ENCODE measurements at regions of chr9 and their contacts with region 1.

Region 1: GRCh38 chr9:125241000-125241862 is at the start of gene HSPA5:
- DNase-seq: peak; percentile 100
- H3K4me3 Mint-ChIP-seq: peak within 1 kb of the TSS; percentile 95
- H3K27ac Mint-ChIP-seq: peak within 1 kb of the TSS; percentile 99
- H3K4me1 Mint-ChIP-seq: peaks cover 44% of the 10 kb centered on the region
- H3K27me3 Mint-ChIP-seq: peaks cover 2% of the 10 kb centered on the region
- total RNA-seq, gene HSPA5: 136 to 138 TPM

Region 2: GRCh38 chr9:124861342-124862229 is 379.6 kb before region 1 on chr9 and contains the starts of genes ARPC5L and RPL35:
- CTCF ChIA-PET with region 1: no interaction called
- intact Hi-C with region 1: loop called (anchors 1 kb)
- DNase-seq: peak; percentile 96
- H3K4me3 Mint-ChIP-seq: peak within 1 kb of the TSS; percentile 87
- H3K27ac Mint-ChIP-seq: peak within 1 kb of the TSS; percentile 95
- H3K4me1 Mint-ChIP-seq: peaks cover 46% of the 10 kb centered on the region
- H3K27me3 Mint-ChIP-seq: no peaks in the 10 kb centered on the region
- total RNA-seq, gene ARPC5L: 116 to 123 TPM
- total RNA-seq, gene RPL35: 2,701 to 2,729 TPM

Region 3: GRCh38 chr9:124940693-124941453 is 300.4 kb before region 1 on chr9 and contains the start of gene GOLGA1:
- CTCF ChIA-PET with region 1: no interaction called
- intact Hi-C with region 1: loop called (anchors 1 kb)
- DNase-seq: peak; percentile 93
- H3K4me3 Mint-ChIP-seq: peak within 1 kb of the TSS; percentile 98
- H3K27ac Mint-ChIP-seq: peak within 1 kb of the TSS; percentile 98
- H3K4me1 Mint-ChIP-seq: peaks cover 22% of the 10 kb centered on the region
- H3K27me3 Mint-ChIP-seq: no peaks in the 10 kb centered on the region
- total RNA-seq, gene GOLGA1: 14.3 to 15.8 TPM

Region 4: DNA sequence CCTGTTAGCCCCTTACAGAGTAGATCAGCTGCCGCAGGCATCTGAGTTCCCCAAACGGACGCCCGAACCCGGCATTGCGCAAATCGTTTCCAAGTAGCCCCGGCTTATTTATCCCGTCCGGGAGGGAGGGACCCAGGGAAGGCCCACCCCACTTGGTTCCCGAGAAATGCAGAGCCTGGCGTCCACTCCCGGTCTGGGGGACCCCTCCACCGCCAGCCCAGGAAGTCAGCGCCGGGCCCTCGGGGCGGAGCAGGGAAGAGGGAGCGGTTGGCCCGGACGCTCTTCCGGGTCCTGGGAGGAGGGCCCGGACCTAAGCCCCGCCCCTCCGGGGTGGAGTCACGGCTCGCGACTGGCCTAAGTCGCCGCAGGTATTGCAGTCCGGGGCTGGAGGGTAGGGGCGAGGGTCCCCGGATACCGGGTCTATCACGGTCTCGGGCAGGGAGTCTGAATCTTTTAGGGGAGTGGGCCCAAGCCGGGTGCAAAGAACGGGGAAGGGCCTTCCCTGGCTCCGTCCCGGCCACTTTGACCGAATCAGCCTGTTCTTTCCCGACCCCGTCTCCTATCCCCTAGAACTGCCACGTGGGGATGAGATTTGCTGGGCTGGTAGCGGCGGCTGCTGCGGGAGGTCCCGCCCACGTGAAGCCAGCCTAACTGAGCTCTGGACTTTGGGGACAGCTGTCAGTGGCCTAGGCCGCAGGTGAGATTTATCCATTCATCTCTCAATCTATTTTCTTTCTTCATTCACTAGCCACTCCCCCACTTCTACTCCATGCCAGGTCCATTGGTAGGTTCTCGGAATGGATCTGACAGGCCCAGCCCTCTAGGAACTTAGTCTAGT is 40.8 kb before region 1 on chr9 and contains the start of gene RABEPK:
- CTCF ChIA-PET with region 1: no interaction called
- intact Hi-C with region 1: loop called (anchors 1 kb)
- DNase-seq: peak; percentile 91
- H3K4me3 Mint-ChIP-seq: peak within 1 kb of the TSS; percentile 91
- H3K27ac Mint-ChIP-seq: peak within 1 kb of the TSS; percentile 81
- H3K4me1 Mint-ChIP-seq: peaks cover 39% of the 10 kb centered on the region
- H3K27me3 Mint-ChIP-seq: no peaks in the 10 kb centered on the region
- total RNA-seq, gene RABEPK: 18.4 to 19.8 TPM

Region 5: DNA sequence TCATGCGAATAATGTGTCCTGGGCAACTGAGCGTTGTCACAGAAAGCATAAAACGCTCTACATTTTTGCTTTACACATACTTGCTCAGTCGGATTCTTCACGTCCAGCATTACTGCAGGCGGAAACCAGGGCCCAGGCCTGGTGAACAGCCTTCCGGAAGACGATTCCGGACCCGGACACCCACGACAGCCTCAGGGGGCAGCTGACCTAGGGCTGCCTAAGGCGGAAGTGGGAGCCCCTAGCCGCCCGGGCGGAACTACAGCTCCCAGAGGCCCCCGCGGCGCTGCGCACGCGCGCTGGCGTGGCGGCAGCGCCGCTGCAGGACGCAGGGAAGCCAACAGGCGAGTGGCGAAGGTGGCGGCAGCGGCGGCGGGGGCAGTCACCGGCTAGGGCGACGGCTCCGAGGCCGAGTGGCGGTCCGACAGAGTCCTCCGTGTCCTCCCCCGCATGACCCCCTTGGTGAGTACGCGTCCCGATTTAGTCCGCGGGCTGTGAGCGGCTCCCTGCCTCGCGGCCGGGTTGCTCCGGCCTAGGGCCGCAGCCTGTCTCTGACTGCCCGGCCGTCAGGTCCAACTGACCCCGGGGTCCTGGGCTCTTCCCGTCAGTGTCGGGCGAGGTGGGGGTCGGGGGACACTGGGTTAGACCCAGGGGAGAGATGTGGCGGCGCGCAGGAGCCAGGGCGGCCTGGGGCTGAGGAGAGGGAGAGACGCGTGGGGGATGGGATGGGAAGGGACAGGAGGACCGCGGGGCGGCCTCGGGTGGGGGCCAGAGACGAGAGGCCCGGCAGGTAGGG is 20.5 kb after region 1 on chr9 and contains the start of gene GAPVD1:
- CTCF ChIA-PET with region 1: no interaction called
- intact Hi-C with region 1: loop called (anchors 1 kb)
- DNase-seq: peak; percentile 90
- H3K4me3 Mint-ChIP-seq: peak within 1 kb of the TSS; percentile 98
- H3K27ac Mint-ChIP-seq: peak within 1 kb of the TSS; percentile 86
- H3K4me1 Mint-ChIP-seq: peaks cover 31% of the 10 kb centered on the region
- H3K27me3 Mint-ChIP-seq: no peaks in the 10 kb centered on the region
- total RNA-seq, gene GAPVD1: 38.1 to 40.0 TPM

Region 6: DNA sequence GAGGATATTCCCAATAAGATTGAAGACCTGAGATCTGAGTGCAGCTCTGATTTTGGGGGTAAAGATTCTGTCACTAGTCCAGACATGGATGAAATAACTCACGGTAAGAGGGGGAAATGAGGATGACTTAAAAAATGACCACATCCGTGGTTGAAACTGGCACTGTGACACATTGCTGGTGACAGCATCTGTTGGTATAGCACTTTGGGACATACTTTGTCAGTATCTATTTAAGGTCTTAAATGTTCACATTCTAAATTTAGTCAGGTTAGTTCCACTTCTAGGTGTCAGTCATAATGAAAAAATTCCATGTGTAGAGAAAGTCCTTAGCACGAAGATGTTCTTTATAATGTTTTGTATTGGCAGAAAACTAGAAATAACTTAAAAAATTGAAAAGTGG is 91.3 kb after region 1 on chr9:
- CTCF ChIA-PET with region 1: interaction called, 5 read pairs
- intact Hi-C with region 1: loop called (anchors 1 kb)
- DNase-seq: peak; percentile 71
- H3K4me3 Mint-ChIP-seq: no peak overlapping the region
- H3K27ac Mint-ChIP-seq: peak overlapping the region; percentile 55
- H3K4me1 Mint-ChIP-seq: peaks cover 12% of the 10 kb centered on the region
- H3K27me3 Mint-ChIP-seq: no peaks in the 10 kb centered on the region

Region 7: DNA sequence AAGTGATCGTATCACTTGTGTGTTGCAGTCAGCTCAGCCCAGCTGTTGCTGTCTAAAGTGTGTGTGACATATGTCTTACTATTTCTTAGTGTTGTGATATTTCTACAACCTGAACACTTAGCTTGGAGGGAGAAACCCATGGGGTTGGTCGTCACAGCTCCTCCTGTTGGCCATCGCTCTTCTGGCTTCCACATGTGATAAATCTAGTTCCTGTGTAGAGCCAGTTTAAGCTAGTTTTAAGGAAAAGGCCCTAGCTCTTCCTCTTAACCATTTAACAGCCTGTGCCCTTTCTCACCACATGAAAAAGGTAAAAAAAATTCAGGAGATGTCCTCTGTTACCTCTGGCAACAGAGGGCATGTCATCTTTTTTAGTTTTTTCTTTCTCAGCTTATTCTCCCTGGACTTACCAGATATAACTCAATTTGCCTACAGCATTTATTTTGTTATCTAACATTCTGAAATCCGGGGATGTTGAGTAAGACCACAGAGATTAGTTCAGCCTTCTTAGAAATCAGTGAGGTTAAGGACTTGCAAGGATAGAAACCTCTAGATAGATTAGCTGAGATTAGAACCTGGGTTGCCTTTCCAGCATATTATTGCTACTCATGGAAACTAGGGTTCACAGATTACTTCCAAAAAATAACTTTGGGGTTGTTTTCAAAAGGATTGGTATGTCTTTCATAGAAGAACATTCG is 120.8 kb after region 1 on chr9:
- CTCF ChIA-PET with region 1: no interaction called
- intact Hi-C with region 1: loop called (anchors 5 kb)
- DNase-seq: peak; percentile 42
- H3K4me3 Mint-ChIP-seq: no peak overlapping the region
- H3K27ac Mint-ChIP-seq: no peak overlapping the region
- H3K4me1 Mint-ChIP-seq: peaks cover 17% of the 10 kb centered on the region
- H3K27me3 Mint-ChIP-seq: no peaks in the 10 kb centered on the region

Measured in activated naive CD4-positive, alpha-beta T cell treated with anti-CD3 and anti-CD28 coated beads for 36 hours (primary cell).